ENCODE measurements at regions of chr21 and their contacts with region 1.

Region 1: DNA sequence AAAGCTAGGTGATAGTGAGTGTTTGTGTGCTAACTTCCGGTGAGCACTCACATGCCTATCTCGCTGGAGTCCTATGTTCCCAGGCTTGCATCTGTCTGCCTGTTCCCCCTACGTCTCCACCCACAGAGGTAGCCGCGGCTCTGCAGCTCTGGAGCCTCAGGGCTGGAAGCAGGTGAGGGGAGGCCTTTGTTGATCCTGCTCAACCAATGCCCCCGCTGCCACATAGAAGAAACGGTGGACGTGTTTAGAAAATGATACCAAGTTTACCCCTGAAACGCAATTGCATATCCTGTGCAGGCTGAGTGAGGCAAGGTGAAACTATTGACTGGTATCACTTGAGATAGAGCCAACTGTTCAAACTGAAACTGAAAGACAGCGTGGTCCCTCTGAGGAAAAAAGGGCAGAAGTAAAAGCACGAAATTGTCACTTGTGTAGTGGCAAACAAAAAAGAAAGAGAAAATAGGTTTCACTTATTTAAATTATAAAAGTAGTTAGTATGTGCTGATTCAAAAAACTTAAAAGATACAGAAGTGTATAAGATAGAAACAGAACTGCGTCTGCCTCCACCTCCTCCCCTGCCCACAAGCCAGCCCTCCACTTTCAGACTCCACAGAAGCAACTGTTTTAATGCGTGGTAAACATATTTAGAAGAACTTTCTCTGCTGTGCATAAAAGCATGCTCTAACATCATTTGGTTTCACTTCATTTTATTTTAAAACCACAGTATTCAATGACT is 38.6 kb upstream of the ETS2 start:
- DNase-seq: peak; percentile 21 to 85 (median 77)
- ATAC-seq: peak; percentile 93
- H3K4me3 ChIP-seq: peak overlapping the region; percentile 74
- H3K4me3 Mint-ChIP-seq: peak overlapping the region; percentile 76 to 98 (median 90)
- H3K27ac ChIP-seq: peak overlapping the region; percentile 67
- H3K27ac Mint-ChIP-seq: peak overlapping the region; percentile 93 to 99 (median 95)
- H3K4me1 ChIP-seq: peaks cover 24% of the 10 kb centered on the region in 2 donors
- H3K4me1 Mint-ChIP-seq: peaks cover 15 to 45% (median 35%) of the 10 kb centered on the region in 7 donors
- H3K27me3 ChIP-seq: no peaks in the 10 kb centered on the region
- H3K27me3 Mint-ChIP-seq: no peaks in the 10 kb centered on the region

Region 2: DNA sequence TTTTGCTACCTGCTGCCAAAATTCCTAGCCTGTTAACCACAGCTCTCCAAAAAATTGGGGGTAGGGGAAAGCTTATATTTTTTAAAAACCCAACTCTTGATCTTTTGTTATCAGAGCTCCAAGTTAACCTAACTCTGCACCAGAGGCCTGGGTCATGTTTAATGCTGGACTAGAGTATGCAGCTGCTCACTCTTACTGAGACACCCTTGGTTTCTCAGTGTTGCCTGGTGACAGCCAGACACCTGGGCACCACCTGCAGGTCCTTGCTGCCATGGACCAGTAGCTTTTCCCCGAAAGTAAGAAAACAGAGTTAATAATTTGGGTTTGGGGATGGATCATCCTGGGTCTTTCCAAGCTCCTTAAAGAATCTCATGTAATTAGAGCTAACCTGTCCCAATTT is 881.0 kb before region 1 on chr21:
- CTCF ChIA-PET with region 1: no interaction called
- POLR2A ChIA-PET with region 1: no interaction called
- intact Hi-C with region 1: no loop called
- DNase-seq: no peak
- ATAC-seq: no peak
- H3K4me3 ChIP-seq: no peak overlapping the region
- H3K4me3 Mint-ChIP-seq: no peak overlapping the region
- H3K27ac ChIP-seq: no peak overlapping the region
- H3K27ac Mint-ChIP-seq: no peak overlapping the region
- H3K4me1 ChIP-seq: no peaks in the 10 kb centered on the region
- H3K4me1 Mint-ChIP-seq: no peaks in the 10 kb centered on the region
- H3K27me3 ChIP-seq: no peaks in the 10 kb centered on the region
- H3K27me3 Mint-ChIP-seq: peaks cover 2 to 46% (median 30%) of the 10 kb centered on the region in 5 donors

Region 3: DNA sequence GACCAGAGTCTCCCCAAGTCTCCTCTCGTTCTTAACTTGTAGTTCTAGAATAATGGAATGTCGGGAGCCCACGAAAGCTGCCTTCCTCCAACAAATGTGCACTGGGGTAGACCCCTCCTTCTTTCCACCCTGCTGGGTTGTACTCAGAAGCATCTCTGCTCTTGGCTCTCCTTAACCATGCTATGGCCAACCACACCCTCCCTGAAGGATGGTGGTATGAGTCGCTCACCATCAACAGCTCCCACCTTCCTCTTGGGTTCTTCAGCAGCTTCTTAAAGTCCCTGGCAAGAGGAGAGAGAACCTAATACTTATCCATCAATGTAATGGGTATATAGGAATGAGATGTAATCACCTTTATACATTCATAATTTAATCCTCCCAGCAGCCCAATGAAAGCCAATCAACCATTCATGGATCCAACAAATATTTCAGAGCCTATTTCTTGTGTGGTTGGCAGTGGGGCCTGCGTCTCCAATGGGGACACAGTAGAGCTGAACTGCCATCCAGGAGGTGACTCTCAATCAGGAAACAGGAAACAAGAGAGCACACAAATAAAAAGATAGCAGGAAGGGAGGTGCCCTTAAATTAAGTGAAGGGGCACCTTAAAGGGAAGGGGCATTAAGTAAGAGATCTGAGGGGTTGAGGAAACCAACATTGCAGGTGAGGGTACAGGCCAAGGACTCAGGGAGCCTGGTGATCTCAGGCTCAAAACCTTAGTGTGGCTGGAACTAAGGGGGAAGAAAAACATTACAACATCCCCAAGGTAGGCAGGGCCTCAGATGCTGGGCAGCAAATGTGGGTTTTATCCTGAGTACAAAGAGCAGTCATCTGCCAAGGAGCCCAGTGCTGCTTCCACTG is 25.8 kb before region 1 on chr21:
- CTCF ChIA-PET with region 1: no interaction called
- POLR2A ChIA-PET with region 1: no interaction called
- intact Hi-C with region 1: no loop called
- DNase-seq: no peak
- ATAC-seq: no peak
- H3K4me3 ChIP-seq: no peak overlapping the region
- H3K4me3 Mint-ChIP-seq: peak overlapping the region in 4 of 10 donors; percentile 0 to 19 (median 2)
- H3K27ac ChIP-seq: no peak overlapping the region
- H3K27ac Mint-ChIP-seq: peak overlapping the region in 3 of 9 donors; percentile 4 to 68 (median 50)
- H3K4me1 ChIP-seq: peaks cover 0 to 3% of the 10 kb centered on the region in 2 donors
- H3K4me1 Mint-ChIP-seq: peaks cover 13 to 25% (median 22%) of the 10 kb centered on the region in 7 donors
- H3K27me3 ChIP-seq: no peaks in the 10 kb centered on the region
- H3K27me3 Mint-ChIP-seq: peaks cover 0 to 13% (median 2%) of the 10 kb centered on the region in 5 donors

Region 4: GRCh38 chr21:38755681-38756371 is 11.3 kb before region 1 on chr21:
- CTCF ChIA-PET with region 1: interaction called, 3 read pairs
- POLR2A ChIA-PET with region 1: interaction called, 12 read pairs
- intact Hi-C with region 1: loop called in 1 of 2 experiments (anchors 1 kb)
- DNase-seq: peak in 2 of 9 donors; percentile 6 to 14
- ATAC-seq: peak; percentile 78
- H3K4me3 ChIP-seq: no peak overlapping the region
- H3K4me3 Mint-ChIP-seq: no peak overlapping the region
- H3K27ac ChIP-seq: no peak overlapping the region
- H3K27ac Mint-ChIP-seq: peak overlapping the region in 4 of 9 donors; percentile 1 to 75 (median 50)
- H3K4me1 ChIP-seq: peaks cover 0 to 3% of the 10 kb centered on the region in 2 donors
- H3K4me1 Mint-ChIP-seq: peaks cover 8 to 17% (median 11%) of the 10 kb centered on the region in 7 donors
- H3K27me3 ChIP-seq: no peaks in the 10 kb centered on the region
- H3K27me3 Mint-ChIP-seq: peaks cover 0 to 11% (median 0%) of the 10 kb centered on the region in 5 donors

Region 5: DNA sequence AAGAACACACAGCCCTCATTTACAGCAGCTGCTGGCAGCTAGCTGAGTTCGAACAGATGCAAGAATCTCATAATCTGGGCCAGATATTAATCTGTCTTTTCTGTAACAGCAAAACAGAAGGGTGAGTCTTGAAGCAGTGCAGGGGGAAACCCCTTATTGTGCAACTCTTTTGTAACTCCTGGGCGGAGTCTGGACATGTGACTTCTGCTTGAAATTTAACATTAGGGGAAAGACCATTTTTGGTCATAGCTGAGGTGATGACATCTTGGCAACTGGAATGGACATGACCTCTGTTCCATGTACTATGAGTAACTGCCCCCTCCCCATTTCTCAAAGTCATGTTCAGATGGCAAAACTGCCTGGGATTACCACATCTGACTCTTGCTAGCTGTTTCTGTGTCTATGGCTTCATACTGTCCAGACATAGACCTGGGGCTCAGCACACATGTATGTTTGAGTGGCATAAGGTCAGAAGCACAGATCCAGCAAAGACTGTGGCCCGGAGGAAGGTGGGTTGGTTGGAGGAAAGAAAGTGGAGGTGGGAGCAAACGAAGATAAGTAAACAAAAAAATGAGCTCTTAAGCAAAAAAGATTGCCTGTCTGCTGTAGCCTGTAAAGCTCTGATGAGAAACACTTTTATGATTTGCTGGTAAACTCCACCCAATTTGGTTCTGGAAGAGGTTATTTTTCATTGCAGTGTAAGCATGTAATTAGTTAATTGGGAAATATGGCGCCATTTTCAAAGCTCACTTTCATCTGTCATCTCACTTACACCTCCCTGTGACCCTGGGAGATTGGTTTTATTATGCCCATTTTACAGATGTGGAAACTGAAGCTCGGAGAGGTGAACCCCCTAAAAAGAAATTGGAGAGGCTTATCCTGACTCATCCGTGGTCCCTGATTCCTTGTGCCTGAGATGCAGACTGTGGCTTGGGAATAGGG is 64.6 kb after region 1 on chr21:
- CTCF ChIA-PET with region 1: no interaction called
- POLR2A ChIA-PET with region 1: no interaction called
- intact Hi-C with region 1: loop called in 1 of 2 experiments (anchors 2 kb)
- DNase-seq: peak in 6 of 9 donors; percentile 14 to 52 (median 31)
- ATAC-seq: peak; percentile 90
- H3K4me3 ChIP-seq: no peak overlapping the region
- H3K4me3 Mint-ChIP-seq: peak overlapping the region in 1 of 10 donors; percentile 11
- H3K27ac ChIP-seq: no peak overlapping the region
- H3K27ac Mint-ChIP-seq: peak overlapping the region in 3 of 9 donors; percentile 24 to 28 (median 24)
- H3K4me1 ChIP-seq: no peaks in the 10 kb centered on the region
- H3K4me1 Mint-ChIP-seq: peaks cover 11 to 17% (median 13%) of the 10 kb centered on the region in 7 donors
- H3K27me3 ChIP-seq: no peaks in the 10 kb centered on the region
- H3K27me3 Mint-ChIP-seq: peaks cover 0 to 7% (median 4%) of the 10 kb centered on the region in 5 donors

Region 6: GRCh38 chr21:39313571-39314142 is 546.5 kb after region 1 on chr21 and contains the start of gene BRWD1:
- CTCF ChIA-PET with region 1: no interaction called
- POLR2A ChIA-PET with region 1: interaction called, 4 read pairs
- intact Hi-C with region 1: loop called (anchors 1 to 5 kb)
- DNase-seq: peak; percentile 73 to 90 (median 84)
- ATAC-seq: peak; percentile 71
- H3K4me3 ChIP-seq: peak within 1 kb of the TSS; percentile 88
- H3K4me3 Mint-ChIP-seq: peak within 1 kb of the TSS; percentile 91 to 97 (median 94)
- H3K27ac ChIP-seq: peak within 1 kb of the TSS; percentile 92
- H3K27ac Mint-ChIP-seq: peak within 1 kb of the TSS; percentile 89 to 98 (median 94)
- H3K4me1 ChIP-seq: peaks cover 11% of the 10 kb centered on the region in 2 donors
- H3K4me1 Mint-ChIP-seq: peaks cover 28 to 51% (median 45%) of the 10 kb centered on the region in 7 donors
- H3K27me3 ChIP-seq: no peaks in the 10 kb centered on the region
- H3K27me3 Mint-ChIP-seq: no peaks in the 10 kb centered on the region
- total RNA-seq, gene BRWD1: 41.1 to 108 (median 83.9) TPM

Region 7: GRCh38 chr21:39340687-39341086 is 573.5 kb after region 1 on chr21:
- CTCF ChIA-PET with region 1: no interaction called
- POLR2A ChIA-PET with region 1: no interaction called
- intact Hi-C with region 1: no loop called
- DNase-seq: no peak
- ATAC-seq: no peak
- H3K4me3 ChIP-seq: no peak overlapping the region
- H3K4me3 Mint-ChIP-seq: no peak overlapping the region
- H3K27ac ChIP-seq: no peak overlapping the region
- H3K27ac Mint-ChIP-seq: peak overlapping the region in 1 of 9 donors; percentile 53
- H3K4me1 ChIP-seq: peaks cover 0 to 4% of the 10 kb centered on the region in 2 donors
- H3K4me1 Mint-ChIP-seq: peaks cover 7 to 20% (median 11%) of the 10 kb centered on the region in 7 donors
- H3K27me3 ChIP-seq: no peaks in the 10 kb centered on the region
- H3K27me3 Mint-ChIP-seq: no peaks in the 10 kb centered on the region

Region 8: GRCh38 chr21:39388038-39388810 is 621.1 kb after region 1 on chr21:
- CTCF ChIA-PET with region 1: no interaction called
- POLR2A ChIA-PET with region 1: no interaction called
- intact Hi-C with region 1: loop called in 1 of 2 experiments (anchors 10 kb)
- DNase-seq: peak; percentile 71 to 93 (median 83)
- ATAC-seq: peak; percentile 87
- H3K4me3 ChIP-seq: peak overlapping the region; percentile 51
- H3K4me3 Mint-ChIP-seq: peak overlapping the region; percentile 83 to 91 (median 90)
- H3K27ac ChIP-seq: peak overlapping the region; percentile 67
- H3K27ac Mint-ChIP-seq: peak overlapping the region; percentile 71 to 94 (median 90)
- H3K4me1 ChIP-seq: peaks cover 11 to 15% of the 10 kb centered on the region in 2 donors
- H3K4me1 Mint-ChIP-seq: peaks cover 18 to 38% (median 31%) of the 10 kb centered on the region in 7 donors
- H3K27me3 ChIP-seq: no peaks in the 10 kb centered on the region
- H3K27me3 Mint-ChIP-seq: no peaks in the 10 kb centered on the region